Activated T-helper 1 cell treated with anti-CD3 and anti-CD28 coated beads, Interleukin-12 subunit alpha, Interleukin-12 subunit beta, Interleukin-2, Interleukin-4 antibody, amounts not matched to agents 30 ng/mL and 10 ng/mL and 1 ng/mL, durations not matched to agents 14 hours and 24 hours and 36 hours (primary cell): ENCODE measurements at regions of chr1 and their contacts with region 1.

Region 1: GRCh38 chr1:113072757-113073478 is at the start of gene LRIG2:
- DNase-seq: peak; percentile 97
- H3K4me3 Mint-ChIP-seq: peak within 1 kb of the TSS; percentile 98
- H3K27ac Mint-ChIP-seq: peak within 1 kb of the TSS; percentile 86
- H3K4me1 Mint-ChIP-seq: peaks cover 25% of the 10 kb centered on the region
- H3K27me3 Mint-ChIP-seq: no peaks in the 10 kb centered on the region
- total RNA-seq, gene LRIG2: 11.2 and 12.3 TPM in 2 replicates

Region 2: DNA sequence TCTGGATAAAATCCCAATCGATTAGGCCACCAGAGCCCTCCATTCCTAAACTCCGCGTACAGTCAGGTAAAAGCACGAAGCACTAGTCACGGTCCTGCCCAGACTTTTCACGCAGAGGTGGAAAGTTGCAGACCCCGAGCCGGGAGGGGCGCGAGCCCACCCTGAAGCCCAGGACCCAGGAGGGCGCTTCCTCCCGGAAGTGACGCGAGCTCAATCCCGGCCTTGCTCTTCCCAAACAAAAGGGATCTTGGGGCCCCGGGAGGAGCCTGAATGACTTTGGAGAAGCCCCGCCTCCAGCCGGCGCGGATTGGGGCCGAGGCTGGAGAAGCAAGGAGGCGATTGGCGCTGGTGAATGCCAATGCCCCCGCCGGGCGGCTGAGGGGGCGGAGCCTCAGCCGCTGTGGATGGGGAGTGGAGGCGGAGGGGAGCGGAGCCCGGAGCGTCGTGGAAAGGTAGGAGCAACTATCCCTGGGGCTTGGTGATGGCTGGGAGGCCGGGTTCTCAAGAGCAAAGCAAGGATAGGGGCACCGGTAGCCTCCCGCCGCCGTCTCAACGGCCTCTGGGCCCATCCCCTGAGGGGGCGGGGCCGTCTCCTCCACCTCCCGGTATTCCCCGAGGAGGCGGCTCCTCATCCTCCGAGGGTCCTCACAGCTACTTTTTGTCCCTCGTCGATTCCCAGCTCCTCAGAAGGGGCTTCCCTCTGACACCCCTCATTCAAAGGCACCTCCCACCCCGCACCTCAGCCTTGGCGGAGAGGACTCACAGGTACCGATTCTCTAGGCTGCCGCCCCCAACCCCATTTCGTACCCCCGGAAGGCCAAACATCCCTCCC is 676.9 kb before region 1 on chr1 and contains the start of gene CTTNBP2NL:
- intact Hi-C with region 1: loop called (anchors 5 kb)
- DNase-seq: peak; percentile 76
- H3K4me3 Mint-ChIP-seq: peak within 1 kb of the TSS; percentile 99
- H3K27ac Mint-ChIP-seq: peak within 1 kb of the TSS; percentile 85
- H3K4me1 Mint-ChIP-seq: peaks cover 49% of the 10 kb centered on the region
- H3K27me3 Mint-ChIP-seq: peaks cover 7% of the 10 kb centered on the region
- total RNA-seq, gene CTTNBP2NL: 3.9 and 4.7 TPM in 2 replicates

Region 3: GRCh38 chr1:112809253-112809684 is 263.6 kb before region 1 on chr1:
- intact Hi-C with region 1: loop called (anchors 2 kb)
- DNase-seq: peak; percentile 48
- H3K4me3 Mint-ChIP-seq: no peak overlapping the region
- H3K27ac Mint-ChIP-seq: no peak overlapping the region
- H3K4me1 Mint-ChIP-seq: no peaks in the 10 kb centered on the region
- H3K27me3 Mint-ChIP-seq: peaks cover 12% of the 10 kb centered on the region

Region 4: DNA sequence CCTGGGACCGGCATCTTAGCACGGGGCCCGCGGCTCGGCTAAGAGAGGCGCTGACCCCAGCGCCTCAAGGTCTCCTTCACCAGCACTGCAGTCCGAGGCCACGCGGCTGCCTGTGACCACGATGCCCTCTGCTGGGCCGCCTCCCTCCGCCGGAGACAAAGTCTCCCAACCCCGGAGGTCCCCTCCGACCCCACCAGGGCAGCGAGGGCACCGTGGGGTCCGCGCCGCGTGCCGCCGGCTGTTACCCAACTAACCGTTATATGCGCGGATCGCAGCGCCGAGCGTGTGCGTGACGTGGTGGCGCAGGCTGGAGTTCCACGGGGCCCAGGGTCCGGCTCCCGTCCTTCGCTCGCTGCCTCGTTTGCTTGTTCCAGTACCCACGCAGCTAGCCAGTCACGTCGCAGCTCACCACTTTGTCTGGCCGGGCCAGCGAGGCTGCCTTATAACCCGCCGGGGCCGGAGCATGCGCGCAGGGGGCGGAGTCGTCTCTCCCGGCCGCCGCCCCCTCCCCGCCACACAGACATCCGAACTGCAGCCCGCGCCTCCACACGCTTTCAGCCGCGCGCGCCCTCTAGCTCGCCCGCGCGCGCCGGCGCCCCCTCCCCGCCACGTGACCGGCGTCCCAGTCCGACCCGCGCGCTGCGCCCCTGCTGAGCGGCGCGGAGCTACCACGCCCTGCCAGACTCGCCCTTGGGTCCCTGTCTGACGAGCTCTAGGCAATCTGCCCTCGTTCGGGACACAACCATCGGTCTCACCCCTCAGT is 117.0 kb before region 1 on chr1 and contains the start of gene SLC16A1:
- intact Hi-C with region 1: loop called (anchors 2 kb)
- DNase-seq: peak; percentile 90
- H3K4me3 Mint-ChIP-seq: peak within 1 kb of the TSS; percentile 90
- H3K27ac Mint-ChIP-seq: peak within 1 kb of the TSS; percentile 100
- H3K4me1 Mint-ChIP-seq: peaks cover 59% of the 10 kb centered on the region
- H3K27me3 Mint-ChIP-seq: no peaks in the 10 kb centered on the region
- total RNA-seq, gene SLC16A1: 73.6 and 77.4 TPM in 2 replicates

Region 5: DNA sequence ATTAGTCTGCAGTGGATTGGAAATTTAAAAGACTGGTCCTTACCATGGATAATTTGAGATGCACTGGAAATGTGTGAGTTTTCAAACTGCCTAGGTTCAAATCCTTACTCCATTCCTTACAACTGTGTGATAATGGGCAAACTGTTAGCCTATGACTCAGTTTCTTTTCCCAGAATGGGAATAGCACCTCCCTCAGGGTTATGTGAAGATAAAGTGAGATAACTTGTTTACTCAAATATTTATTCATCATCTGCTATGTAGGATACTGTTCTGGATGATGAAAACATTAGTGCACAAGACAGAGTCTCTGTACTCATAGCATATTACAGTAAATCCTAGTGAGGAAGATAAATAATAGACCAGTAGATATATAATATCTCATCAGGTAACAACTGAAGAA is 28.7 kb after region 1 on chr1:
- intact Hi-C with region 1: no loop called
- DNase-seq: no peak
- H3K4me3 Mint-ChIP-seq: no peak overlapping the region
- H3K27ac Mint-ChIP-seq: no peak overlapping the region
- H3K4me1 Mint-ChIP-seq: no peaks in the 10 kb centered on the region
- H3K27me3 Mint-ChIP-seq: no peaks in the 10 kb centered on the region

Region 6: DNA sequence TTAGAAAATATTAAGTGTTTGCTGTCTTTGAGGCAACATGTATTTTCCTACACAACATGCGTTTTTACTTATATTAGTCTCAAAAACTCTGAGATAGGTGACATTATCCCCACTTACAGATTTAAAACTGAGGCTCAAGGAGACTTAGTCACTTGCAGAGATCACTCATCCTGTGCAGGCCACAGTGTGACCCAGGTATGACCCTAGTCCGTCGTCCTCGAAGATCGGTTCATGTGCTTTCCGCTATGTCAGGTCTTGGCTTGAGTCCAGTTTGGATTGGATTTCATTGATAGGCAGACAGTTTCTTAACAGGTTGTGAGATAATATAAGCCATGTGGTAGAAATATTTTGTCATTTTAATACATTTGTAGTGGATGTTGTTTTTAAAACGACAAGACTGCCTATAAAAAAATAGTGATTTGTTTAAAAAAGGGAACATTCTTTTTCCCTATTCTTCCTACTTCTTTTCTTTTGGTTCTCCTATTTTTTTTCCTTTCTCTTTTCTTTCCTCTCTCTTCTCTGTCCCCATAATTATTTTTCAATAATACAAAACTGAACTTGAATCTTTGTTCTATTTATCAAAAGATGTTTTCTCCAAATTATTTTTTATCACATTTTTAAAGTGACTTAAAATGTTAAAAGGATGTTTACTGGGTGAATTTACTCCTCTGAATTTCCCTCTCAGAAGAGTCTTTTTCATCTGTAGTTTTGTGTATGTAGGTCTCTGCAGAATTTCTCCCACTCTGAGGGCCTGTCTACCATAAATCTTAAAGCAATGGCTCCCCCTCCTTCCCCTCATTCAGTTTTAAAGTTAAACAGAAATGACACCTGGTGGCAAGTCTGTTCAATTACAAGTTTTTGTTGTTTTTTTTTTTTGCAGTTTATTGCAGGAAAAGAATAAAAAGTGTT is 604.6 kb after region 1 on chr1:
- intact Hi-C with region 1: loop called (anchors 2 kb)
- DNase-seq: no peak
- H3K4me3 Mint-ChIP-seq: no peak overlapping the region
- H3K27ac Mint-ChIP-seq: no peak overlapping the region
- H3K4me1 Mint-ChIP-seq: peaks cover 6% of the 10 kb centered on the region
- H3K27me3 Mint-ChIP-seq: no peaks in the 10 kb centered on the region

Region 7: DNA sequence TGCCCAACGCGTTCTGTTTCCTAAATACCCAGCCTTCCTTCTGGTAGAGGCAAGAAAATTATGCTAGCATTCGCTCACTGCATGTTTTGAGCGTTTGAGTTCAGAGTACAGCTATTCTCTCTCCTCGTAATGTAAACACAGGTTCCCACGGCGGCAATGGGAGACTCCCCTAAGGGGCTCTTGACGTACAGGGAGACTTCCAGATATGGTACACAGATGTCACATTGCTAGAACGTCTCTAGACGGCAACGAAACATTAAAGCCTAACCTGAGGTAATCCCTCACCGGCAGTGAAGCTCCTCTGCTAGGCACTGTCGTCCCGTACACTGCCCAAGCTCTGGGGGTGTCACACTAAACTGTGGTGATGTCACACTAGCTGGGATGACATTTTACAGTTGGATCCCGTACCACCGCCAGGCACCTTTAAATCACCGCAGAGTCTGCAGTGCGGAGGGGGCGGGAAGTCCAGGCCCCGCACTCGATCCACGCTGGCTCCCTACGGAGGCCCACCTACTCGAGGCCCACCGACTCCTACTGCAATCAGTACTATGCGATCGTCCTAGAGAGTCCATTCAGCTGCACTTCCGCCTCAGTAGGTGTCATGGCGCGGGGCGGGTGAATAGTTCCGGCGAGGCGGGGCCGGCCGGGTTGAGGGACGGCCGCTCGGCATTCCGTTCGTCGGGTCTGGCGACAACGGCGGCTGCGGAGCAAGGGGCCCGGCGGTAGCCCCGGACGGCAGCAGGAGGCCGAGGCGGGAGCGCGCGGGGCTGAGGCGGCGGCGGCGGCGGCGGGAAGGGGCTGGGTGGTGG is 856.2 kb after region 1 on chr1 and contains the start of gene HIPK1:
- intact Hi-C with region 1: loop called (anchors 2 kb)
- DNase-seq: peak; percentile 91
- H3K4me3 Mint-ChIP-seq: peak within 1 kb of the TSS; percentile 98
- H3K27ac Mint-ChIP-seq: peak within 1 kb of the TSS; percentile 99
- H3K4me1 Mint-ChIP-seq: peaks cover 55% of the 10 kb centered on the region
- H3K27me3 Mint-ChIP-seq: peaks cover 7% of the 10 kb centered on the region
- total RNA-seq, gene HIPK1: 100 and 101 TPM in 2 replicates

Region 8: GRCh38 chr1:114757455-114758250 is 1684.7 kb after region 1 on chr1 and contains the start of gene CSDE1:
- intact Hi-C with region 1: loop called (anchors 10 kb)
- DNase-seq: peak; percentile 96
- H3K4me3 Mint-ChIP-seq: peak within 1 kb of the TSS; percentile 99
- H3K27ac Mint-ChIP-seq: peak within 1 kb of the TSS; percentile 100
- H3K4me1 Mint-ChIP-seq: peaks cover 42% of the 10 kb centered on the region
- H3K27me3 Mint-ChIP-seq: no peaks in the 10 kb centered on the region
- total RNA-seq, gene CSDE1: 398 and 421 TPM in 2 replicates